Common myeloid progenitor, CD34-positive (primary cell): ENCODE measurements at regions of chr2 and their contacts with region 1.

Region 1: GRCh38 chr2:231674587-231675338 is 33.6 kb upstream of the PTMA start:
- DNase-seq: peak; percentile 74 to 95 (median 92)
- H3K4me3 ChIP-seq: peak overlapping the region in 3 of 7 experiments; percentile 10 to 35 (median 29)
- H3K27ac ChIP-seq: peak overlapping the region in 1 of 2 experiments; percentile 6
- H3K4me1 ChIP-seq: peaks cover 0 to 66% (median 45%) of the 10 kb centered on the region in 4 experiments
- H3K27me3 ChIP-seq: no peaks in the 10 kb centered on the region

Region 2: DNA sequence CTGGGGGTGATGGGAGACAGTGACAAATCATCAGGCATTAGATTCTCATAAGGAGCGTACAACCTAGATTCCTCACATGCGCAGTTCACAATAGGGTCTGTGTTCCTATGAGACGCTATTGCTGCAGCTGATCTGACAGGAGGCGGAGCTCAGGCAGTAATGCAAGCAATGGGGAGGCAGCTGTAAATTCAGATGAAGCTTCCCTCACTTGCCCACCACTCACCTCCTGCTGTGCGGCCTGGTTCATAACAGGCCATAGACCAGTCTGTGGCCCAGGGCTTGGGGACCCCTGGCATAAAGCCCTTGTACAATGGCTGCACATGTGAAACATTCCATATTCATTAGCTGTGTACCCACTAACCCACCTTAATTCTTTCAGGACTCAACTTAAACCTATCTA is 162.5 kb before region 1 on chr2:
- CTCF ChIA-PET with region 1: no interaction called
- POLR2A ChIA-PET with region 1: no interaction called
- DNase-seq: no peak
- H3K4me3 ChIP-seq: no peak overlapping the region
- H3K27ac ChIP-seq: no peak overlapping the region
- H3K4me1 ChIP-seq: peaks cover 2 to 19% (median 10%) of the 10 kb centered on the region in 4 experiments
- H3K27me3 ChIP-seq: no peaks in the 10 kb centered on the region

Region 3: GRCh38 chr2:231522799-231523180 is 152.0 kb before region 1 on chr2:
- CTCF ChIA-PET with region 1: no interaction called
- POLR2A ChIA-PET with region 1: no interaction called
- DNase-seq: no peak
- H3K4me3 ChIP-seq: no peak overlapping the region
- H3K27ac ChIP-seq: no peak overlapping the region
- H3K4me1 ChIP-seq: peaks cover 2 to 44% (median 19%) of the 10 kb centered on the region in 4 experiments
- H3K27me3 ChIP-seq: peaks cover 0 to 15% (median 0%) of the 10 kb centered on the region in 5 experiments

Region 4: DNA sequence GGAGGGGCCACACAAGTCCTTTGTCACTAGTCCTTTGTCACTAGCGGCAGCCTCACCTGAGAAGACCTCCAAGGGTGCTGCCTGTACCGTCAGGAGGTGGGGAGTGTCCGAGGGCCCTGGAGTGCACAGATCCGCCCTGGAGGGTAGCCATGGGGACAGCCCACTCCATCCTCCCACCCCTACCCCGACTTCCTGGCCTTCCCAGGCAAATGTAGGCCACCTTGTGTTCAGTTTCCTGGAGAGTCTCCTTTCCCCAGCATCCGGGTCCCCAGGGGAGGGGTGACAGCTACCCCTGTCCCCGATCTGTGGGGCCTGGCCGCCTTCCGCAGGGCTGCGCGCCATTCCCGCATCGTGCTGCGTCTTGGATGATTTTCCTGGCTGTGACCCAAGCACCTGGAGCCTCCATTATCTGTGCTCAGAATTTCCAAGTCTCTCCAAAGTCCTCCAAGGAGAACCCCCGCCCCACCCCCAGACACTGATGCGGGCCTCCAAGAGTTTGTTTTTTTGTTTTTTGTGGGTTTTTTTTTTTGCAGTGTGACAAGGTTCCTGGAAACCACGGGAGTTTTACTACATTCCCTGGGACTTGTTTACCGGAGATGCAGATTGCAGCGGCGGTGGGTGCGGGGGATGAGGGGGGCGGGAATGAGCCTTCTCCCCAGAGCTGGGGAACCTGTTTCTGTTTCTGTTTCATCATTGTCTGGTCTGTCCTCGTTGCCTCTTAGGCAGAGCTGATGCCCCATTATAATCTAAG is 53.5 kb before region 1 on chr2:
- CTCF ChIA-PET with region 1: interaction called, 11 read pairs
- POLR2A ChIA-PET with region 1: no interaction called
- DNase-seq: no peak
- H3K4me3 ChIP-seq: no peak overlapping the region
- H3K27ac ChIP-seq: no peak overlapping the region
- H3K4me1 ChIP-seq: peaks cover 0 to 25% (median 14%) of the 10 kb centered on the region in 4 experiments
- H3K27me3 ChIP-seq: no peaks in the 10 kb centered on the region

Region 5: GRCh38 chr2:231648587-231649174 is 26.1 kb before region 1 on chr2:
- CTCF ChIA-PET with region 1: interaction called, 175 read pairs
- POLR2A ChIA-PET with region 1: no interaction called
- DNase-seq: peak; percentile 55 to 79 (median 76)
- H3K4me3 ChIP-seq: no peak overlapping the region
- H3K27ac ChIP-seq: no peak overlapping the region
- H3K4me1 ChIP-seq: peaks cover 0 to 31% (median 12%) of the 10 kb centered on the region in 4 experiments
- H3K27me3 ChIP-seq: no peaks in the 10 kb centered on the region

Region 6: GRCh38 chr2:231687133-231687852 is 12.5 kb after region 1 on chr2:
- CTCF ChIA-PET with region 1: interaction called, 107 read pairs
- POLR2A ChIA-PET with region 1: interaction called, 3 read pairs
- DNase-seq: peak; percentile 79 to 88 (median 87)
- H3K4me3 ChIP-seq: peak overlapping the region in 6 of 7 experiments; percentile 33 to 70 (median 48)
- H3K27ac ChIP-seq: no peak overlapping the region
- H3K4me1 ChIP-seq: peaks cover 0 to 34% (median 24%) of the 10 kb centered on the region in 4 experiments
- H3K27me3 ChIP-seq: no peaks in the 10 kb centered on the region

Region 7: DNA sequence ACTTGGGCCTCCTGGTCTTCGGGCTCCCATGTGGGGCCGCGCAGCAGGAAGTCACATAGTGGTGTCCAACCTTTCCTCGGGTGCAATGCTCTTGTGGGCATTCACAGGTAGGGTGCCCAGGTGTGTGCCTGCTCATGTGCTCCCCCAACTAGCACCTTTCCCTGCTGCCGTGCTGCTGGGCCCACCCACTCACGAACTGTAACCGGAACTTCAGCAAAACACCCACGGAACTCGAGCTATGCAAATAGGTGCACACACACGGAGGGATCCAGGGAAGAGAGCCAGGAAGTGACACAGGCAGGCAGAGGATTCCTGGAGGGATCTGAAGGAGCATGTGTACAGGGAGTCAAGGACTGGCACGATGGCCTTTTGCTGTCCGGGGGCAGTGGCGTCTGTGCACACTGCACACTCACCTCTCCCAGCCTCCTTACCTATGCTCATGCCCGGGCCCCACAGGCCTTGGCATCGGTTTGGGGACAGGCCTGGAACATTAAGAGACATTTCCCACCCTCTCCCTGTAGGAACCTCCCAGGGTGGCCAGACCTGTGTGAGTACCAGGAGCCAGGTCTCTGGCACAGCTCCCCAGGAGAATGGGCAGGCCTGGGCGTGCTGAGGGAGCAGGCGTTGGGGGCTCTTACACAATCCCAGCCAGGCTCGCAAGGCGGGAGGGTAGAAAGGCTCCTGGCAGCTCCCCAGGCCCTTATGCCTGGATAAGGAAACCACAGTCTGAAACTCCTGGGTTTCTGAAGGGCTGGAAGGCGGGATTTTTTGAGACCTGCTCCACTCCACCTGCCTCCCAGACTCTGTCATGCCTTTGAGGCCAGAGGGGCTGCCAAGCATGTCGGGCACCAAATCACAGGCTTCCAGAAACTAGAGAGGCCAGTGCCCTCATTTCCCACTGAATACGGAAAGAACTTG is 27.0 kb after region 1 on chr2:
- CTCF ChIA-PET with region 1: interaction called, 51 read pairs
- POLR2A ChIA-PET with region 1: interaction called, 7 read pairs
- DNase-seq: no peak
- H3K4me3 ChIP-seq: no peak overlapping the region
- H3K27ac ChIP-seq: no peak overlapping the region
- H3K4me1 ChIP-seq: peaks cover 0 to 15% (median 12%) of the 10 kb centered on the region in 4 experiments
- H3K27me3 ChIP-seq: no peaks in the 10 kb centered on the region

Region 8: GRCh38 chr2:231713730-231714430 is 39.1 kb after region 1 on chr2:
- CTCF ChIA-PET with region 1: interaction called, 417 read pairs
- POLR2A ChIA-PET with region 1: interaction called, 13 read pairs
- DNase-seq: peak; percentile 93 to 97 (median 95)
- H3K4me3 ChIP-seq: peak overlapping the region in 1 of 7 experiments; percentile 45
- H3K27ac ChIP-seq: no peak overlapping the region
- H3K4me1 ChIP-seq: peaks cover 8 to 38% (median 33%) of the 10 kb centered on the region in 4 experiments
- H3K27me3 ChIP-seq: no peaks in the 10 kb centered on the region

Region 9: GRCh38 chr2:231745303-231746038 is 70.7 kb after region 1 on chr2:
- CTCF ChIA-PET with region 1: no interaction called
- POLR2A ChIA-PET with region 1: no interaction called
- DNase-seq: no peak
- H3K4me3 ChIP-seq: no peak overlapping the region
- H3K27ac ChIP-seq: no peak overlapping the region
- H3K4me1 ChIP-seq: no peaks in the 10 kb centered on the region
- H3K27me3 ChIP-seq: no peaks in the 10 kb centered on the region

Region 10: DNA sequence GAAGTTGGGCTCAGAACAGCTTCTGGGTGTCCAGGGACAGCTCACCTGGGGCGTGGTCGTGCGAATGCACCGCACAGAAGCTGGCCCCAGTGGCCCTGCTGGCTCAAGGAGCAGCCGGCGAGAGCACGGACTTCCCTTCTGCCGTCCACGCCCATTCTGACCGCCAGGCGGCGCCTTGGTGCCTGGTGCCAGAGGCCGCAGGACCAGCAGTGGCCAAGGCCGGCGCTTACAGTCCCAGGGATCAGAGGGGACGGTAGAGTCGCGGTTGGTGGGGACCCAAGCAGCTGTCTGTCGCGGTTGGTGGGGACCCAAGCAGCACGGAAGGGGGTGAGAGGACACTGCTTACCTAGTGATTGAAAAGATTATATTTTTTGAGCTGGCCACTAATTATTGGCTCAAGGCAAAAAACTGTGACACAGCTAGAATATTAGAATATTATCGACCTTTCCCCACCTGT is 225.8 kb after region 1 on chr2:
- CTCF ChIA-PET with region 1: no interaction called
- POLR2A ChIA-PET with region 1: no interaction called
- DNase-seq: peak; percentile 42 to 65 (median 61)
- H3K4me3 ChIP-seq: no peak overlapping the region
- H3K27ac ChIP-seq: no peak overlapping the region
- H3K4me1 ChIP-seq: peaks cover 0 to 2% (median 0%) of the 10 kb centered on the region in 4 experiments
- H3K27me3 ChIP-seq: peaks cover 0 to 2% (median 0%) of the 10 kb centered on the region in 5 experiments